Endothelial cell of umbilical vein (primary cell): ENCODE measurements at regions of chr15 and their contacts with region 1.

Region 1: DNA sequence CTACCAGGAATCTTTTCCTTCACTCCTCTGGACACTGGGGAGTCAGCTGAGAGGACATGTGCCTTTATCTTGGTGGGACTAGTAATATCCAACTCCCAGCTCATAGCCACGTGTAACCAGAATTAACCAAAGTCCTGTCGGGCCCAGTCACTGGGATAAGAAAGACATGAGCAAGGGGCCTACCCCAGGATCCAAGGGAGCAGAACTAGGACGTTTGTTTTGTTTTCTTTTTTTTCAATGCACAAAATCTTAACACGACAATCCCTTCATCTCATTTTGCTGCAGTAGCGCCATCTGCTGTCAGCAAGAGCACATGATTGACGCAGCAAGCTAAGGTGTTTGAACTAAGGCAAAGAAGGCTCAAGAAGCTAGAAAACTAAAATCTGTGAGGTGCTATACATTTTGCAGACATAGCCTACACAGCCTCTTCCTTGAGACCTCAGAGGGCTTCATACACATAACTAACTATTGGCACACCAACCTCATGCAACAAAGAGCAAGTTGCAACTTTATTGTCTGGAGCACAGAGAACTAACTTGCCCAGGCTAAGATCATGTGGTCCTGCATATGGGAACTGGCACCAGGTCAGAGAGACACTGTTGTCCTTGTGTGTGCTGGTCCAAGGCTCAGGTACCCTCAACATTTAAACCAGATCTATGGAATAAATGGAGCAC is 43.6 kb downstream of the RLBP1 start:
- DNase-seq: peak; percentile 73
- H3K4me3 ChIP-seq: no peak overlapping the region
- H3K27ac ChIP-seq: no peak overlapping the region
- H3K4me1 ChIP-seq: peaks cover 8% of the 10 kb centered on the region
- H3K27me3 ChIP-seq: no peaks in the 10 kb centered on the region
- CTCF ChIP-seq: peak; percentile 82 to 89
- POLR2A ChIP-seq: no peak

Region 2: DNA sequence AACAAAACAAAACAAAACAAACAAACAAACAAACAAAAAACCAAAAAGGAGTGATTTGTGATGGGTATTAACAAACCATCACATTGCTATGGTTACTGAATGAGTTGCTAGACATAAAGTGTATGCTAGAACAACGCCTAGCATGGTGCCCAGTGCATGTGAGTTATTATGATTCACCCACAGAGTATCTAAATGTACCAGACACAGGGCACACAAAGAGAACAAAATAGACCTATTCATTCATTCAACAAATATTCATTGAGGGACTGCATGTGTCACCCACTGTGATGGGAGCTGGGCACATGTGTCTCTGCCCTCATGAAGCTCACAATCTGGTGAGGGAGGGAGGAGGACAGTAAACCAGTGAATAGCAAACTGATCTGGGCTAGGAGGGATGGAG is 386.1 kb before region 1 on chr15:
- CTCF ChIA-PET with region 1: no interaction called
- POLR2A ChIA-PET with region 1: no interaction called
- dilution Hi-C with region 1: no loop called
- intact Hi-C with region 1: no loop called
- DNase-seq: no peak
- H3K4me3 ChIP-seq: no peak overlapping the region
- H3K27ac ChIP-seq: no peak overlapping the region
- H3K4me1 ChIP-seq: no peaks in the 10 kb centered on the region
- H3K27me3 ChIP-seq: peaks cover 2 to 10% of the 10 kb centered on the region in 2 experiments
- CTCF ChIP-seq: no peak
- POLR2A ChIP-seq: no peak

Region 3: GRCh38 chr15:88878720-88879184 is 299.0 kb before region 1 on chr15:
- CTCF ChIA-PET with region 1: interaction called, 19 read pairs
- POLR2A ChIA-PET with region 1: no interaction called
- dilution Hi-C with region 1: no loop called
- intact Hi-C with region 1: no loop called
- DNase-seq: peak; percentile 39
- H3K4me3 ChIP-seq: no peak overlapping the region
- H3K27ac ChIP-seq: no peak overlapping the region
- H3K4me1 ChIP-seq: no peaks in the 10 kb centered on the region
- H3K27me3 ChIP-seq: no peaks in the 10 kb centered on the region
- CTCF ChIP-seq: peak; percentile 72 to 87
- POLR2A ChIP-seq: no peak

Region 4: DNA sequence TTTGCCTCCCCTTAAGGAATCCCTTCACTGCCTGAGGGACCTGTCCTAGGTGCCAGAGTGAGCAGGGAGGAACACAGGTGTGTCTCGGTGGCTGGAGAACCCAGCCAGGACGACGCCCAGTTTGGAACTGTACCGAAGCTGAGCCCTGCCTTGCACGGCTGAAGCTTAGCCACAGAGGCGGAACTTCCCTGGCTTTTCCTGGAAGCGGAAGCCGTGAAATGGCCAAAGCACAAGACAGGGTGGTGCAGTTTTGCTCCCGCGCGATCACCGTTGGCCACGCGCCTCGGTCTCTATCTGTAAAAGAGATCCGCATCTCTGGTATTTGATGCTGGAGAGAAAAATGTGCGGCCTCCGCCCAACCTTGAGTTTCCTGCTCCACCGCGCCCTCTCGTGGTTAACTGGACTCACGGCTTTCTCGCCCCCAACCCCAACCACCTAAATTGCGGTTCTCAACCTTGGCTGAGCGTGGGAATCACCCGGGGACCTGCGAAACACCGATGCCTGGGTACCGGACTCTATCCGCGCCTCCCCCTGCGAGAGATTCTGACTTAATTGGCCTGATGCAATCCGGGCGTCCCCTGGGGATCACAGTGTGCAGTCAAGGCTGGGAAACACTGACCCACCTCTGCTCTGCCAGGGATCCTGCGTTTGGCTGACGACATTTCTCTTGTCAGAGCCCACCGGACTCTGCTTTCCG is 160.3 kb before region 1 on chr15:
- CTCF ChIA-PET with region 1: interaction called, 13 read pairs
- POLR2A ChIA-PET with region 1: no interaction called
- dilution Hi-C with region 1: no loop called
- intact Hi-C with region 1: loop called (anchors 1 kb)
- DNase-seq: peak; percentile 64
- H3K4me3 ChIP-seq: peak overlapping the region in 1 of 3 experiments; percentile 21
- H3K27ac ChIP-seq: no peak overlapping the region
- H3K4me1 ChIP-seq: no peaks in the 10 kb centered on the region
- H3K27me3 ChIP-seq: peaks cover 7 to 22% of the 10 kb centered on the region in 2 experiments
- CTCF ChIP-seq: peak; percentile 92
- POLR2A ChIP-seq: no peak

Region 5: GRCh38 chr15:89057504-89058133 is 120.2 kb before region 1 on chr15:
- CTCF ChIA-PET with region 1: interaction called, 198 read pairs
- POLR2A ChIA-PET with region 1: no interaction called
- dilution Hi-C with region 1: loop called (anchors 25 kb)
- intact Hi-C with region 1: loop called (anchors 1 kb)
- DNase-seq: peak; percentile 79
- H3K4me3 ChIP-seq: no peak overlapping the region
- H3K27ac ChIP-seq: no peak overlapping the region
- H3K4me1 ChIP-seq: no peaks in the 10 kb centered on the region
- H3K27me3 ChIP-seq: no peaks in the 10 kb centered on the region
- CTCF ChIP-seq: peak; percentile 95 to 99
- POLR2A ChIP-seq: no peak

Region 6: GRCh38 chr15:89119489-89120123 is 58.2 kb before region 1 on chr15:
- CTCF ChIA-PET with region 1: interaction called, 14 read pairs
- POLR2A ChIA-PET with region 1: no interaction called
- dilution Hi-C with region 1: no loop called
- intact Hi-C with region 1: no loop called
- DNase-seq: peak; percentile 85
- H3K4me3 ChIP-seq: no peak overlapping the region
- H3K27ac ChIP-seq: peak overlapping the region; percentile 85
- H3K4me1 ChIP-seq: peaks cover 35% of the 10 kb centered on the region
- H3K27me3 ChIP-seq: no peaks in the 10 kb centered on the region
- CTCF ChIP-seq: no peak
- POLR2A ChIP-seq: no peak

Region 7: GRCh38 chr15:89187976-89188514 is 10.3 kb after region 1 on chr15:
- CTCF ChIA-PET with region 1: interaction called, 26 read pairs
- POLR2A ChIA-PET with region 1: no interaction called
- dilution Hi-C with region 1: no loop called
- intact Hi-C with region 1: no loop called
- DNase-seq: no peak
- H3K4me3 ChIP-seq: no peak overlapping the region
- H3K27ac ChIP-seq: no peak overlapping the region
- H3K4me1 ChIP-seq: peaks cover 13% of the 10 kb centered on the region
- H3K27me3 ChIP-seq: no peaks in the 10 kb centered on the region
- CTCF ChIP-seq: no peak
- POLR2A ChIP-seq: no peak